Activated CD4-positive, alpha-beta T cell treated with anti-CD3 and anti-CD28 coated beads, Interleukin-2, amount 10 ng/mL, durations not matched to agents 24 days and 14 days (primary cell): ENCODE measurements at regions of chr16 and their contacts with region 1.

Region 1: GRCh38 chr16:50210266-50211038 is 55.9 kb upstream of the ADCY7 start:
- DNase-seq: peak; percentile 90
- H3K4me3 Mint-ChIP-seq: no peak overlapping the region
- H3K27ac Mint-ChIP-seq: peak overlapping the region; percentile 51
- H3K4me1 Mint-ChIP-seq: peaks cover 23% of the 10 kb centered on the region
- H3K27me3 Mint-ChIP-seq: no peaks in the 10 kb centered on the region

Region 2: DNA sequence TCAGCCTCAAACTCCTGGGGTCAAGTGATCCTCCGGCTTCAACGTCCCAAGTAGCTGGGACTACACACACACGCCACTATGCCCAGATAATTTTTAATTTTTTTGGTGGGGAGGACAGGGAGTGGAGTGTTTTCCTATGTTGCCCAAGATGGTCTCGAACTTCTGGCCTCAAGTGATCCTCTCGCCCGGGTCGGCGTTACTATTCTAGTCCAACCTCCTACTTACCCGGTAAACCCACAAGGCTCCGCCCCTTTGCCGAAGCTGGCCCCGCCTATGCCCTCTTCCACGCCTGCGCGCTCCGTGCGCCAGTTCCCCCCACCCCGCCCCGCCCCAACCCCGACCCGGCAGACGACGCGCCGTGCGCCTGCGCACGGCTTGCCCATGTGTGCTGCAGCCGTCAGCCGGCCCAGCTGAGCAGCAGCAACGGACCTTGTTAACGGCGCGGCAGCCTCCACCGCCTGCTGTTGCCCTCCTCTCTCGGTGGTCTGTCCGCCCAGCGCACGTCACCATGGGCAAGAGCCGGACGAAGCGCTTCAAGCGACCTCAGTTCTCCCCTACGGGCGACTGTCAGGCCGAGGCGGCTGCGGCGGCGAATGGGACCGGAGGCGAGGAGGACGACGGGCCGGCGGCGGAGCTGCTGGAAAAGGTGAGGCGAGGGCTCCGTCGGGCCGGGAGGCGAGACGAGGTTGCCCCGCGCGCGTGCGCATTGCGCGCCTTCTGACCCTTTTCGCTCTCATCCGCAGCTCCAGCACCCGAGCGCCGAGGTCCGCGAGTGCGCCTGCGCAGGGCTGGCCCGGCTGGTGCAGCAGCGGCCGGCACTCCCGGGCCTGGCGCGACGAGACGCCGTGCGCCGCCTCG is 144.6 kb before region 1 on chr16 and contains the start of gene HEATR3:
- intact Hi-C with region 1: loop called (anchors 1 kb)
- DNase-seq: peak; percentile 99
- H3K4me3 Mint-ChIP-seq: peak within 1 kb of the TSS; percentile 84
- H3K27ac Mint-ChIP-seq: peak within 1 kb of the TSS; percentile 94
- H3K4me1 Mint-ChIP-seq: peaks cover 29% of the 10 kb centered on the region
- H3K27me3 Mint-ChIP-seq: no peaks in the 10 kb centered on the region
- total RNA-seq, gene HEATR3: 28.5 and 29.2 TPM in 2 replicates

Region 3: GRCh38 chr16:50266337-50267091 is 56.1 kb after region 1 on chr16 and contains the start of gene ADCY7:
- intact Hi-C with region 1: loop called (anchors 5 kb)
- DNase-seq: peak; percentile 95
- H3K4me3 Mint-ChIP-seq: peak within 1 kb of the TSS; percentile 96
- H3K27ac Mint-ChIP-seq: peak within 1 kb of the TSS; percentile 96
- H3K4me1 Mint-ChIP-seq: peaks cover 60% of the 10 kb centered on the region
- H3K27me3 Mint-ChIP-seq: no peaks in the 10 kb centered on the region
- total RNA-seq, gene ADCY7: 85.6 and 86.2 TPM in 2 replicates

Region 4: GRCh38 chr16:50354629-50355456 is 144.4 kb after region 1 on chr16:
- intact Hi-C with region 1: loop called (anchors 1 kb)
- DNase-seq: no peak
- H3K4me3 Mint-ChIP-seq: no peak overlapping the region
- H3K27ac Mint-ChIP-seq: peak overlapping the region; percentile 42
- H3K4me1 Mint-ChIP-seq: peaks cover 18% of the 10 kb centered on the region
- H3K27me3 Mint-ChIP-seq: no peaks in the 10 kb centered on the region